ENCODE measurements at regions of chr3 and their contacts with region 1.

Region 1: GRCh38 chr3:57100046-57100695 is 39.7 kb downstream of the SPATA12 start:
- DNase-seq: peak; percentile 68
- H3K4me3 ChIP-seq: no peak overlapping the region
- H3K27ac ChIP-seq: no peak overlapping the region
- H3K4me1 ChIP-seq: no peaks in the 10 kb centered on the region
- H3K27me3 ChIP-seq: no peaks in the 10 kb centered on the region
- CTCF ChIP-seq: peak; percentile 68

Region 2: DNA sequence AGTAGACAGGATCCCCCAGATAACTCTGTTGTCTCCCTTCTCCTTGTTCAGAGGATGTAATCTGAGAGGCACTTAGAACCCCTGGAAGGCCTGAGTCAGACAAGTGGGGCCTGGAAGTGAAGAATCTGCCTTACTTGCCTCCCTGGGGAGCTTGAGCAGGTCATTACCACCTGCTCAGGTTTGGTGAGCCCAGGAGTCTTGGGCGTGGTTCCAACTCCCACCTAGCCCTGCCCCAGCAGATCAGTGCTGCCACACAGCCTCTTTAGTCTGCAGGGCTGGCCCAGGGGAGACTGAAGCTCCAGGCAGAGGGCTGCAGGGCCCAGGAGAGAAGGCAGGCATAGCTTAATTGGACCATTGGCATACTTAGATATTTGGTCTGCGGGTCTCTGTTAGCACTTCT is 861.9 kb before region 1 on chr3:
- CTCF ChIA-PET with region 1: no interaction called
- POLR2A ChIA-PET with region 1: no interaction called
- intact Hi-C with region 1: no loop called
- DNase-seq: no peak
- H3K4me3 ChIP-seq: no peak overlapping the region
- H3K27ac ChIP-seq: no peak overlapping the region
- H3K4me1 ChIP-seq: no peaks in the 10 kb centered on the region
- H3K27me3 ChIP-seq: no peaks in the 10 kb centered on the region
- CTCF ChIP-seq: no peak

Region 3: GRCh38 chr3:57434041-57434440 is 333.9 kb after region 1 on chr3:
- CTCF ChIA-PET with region 1: no interaction called
- POLR2A ChIA-PET with region 1: no interaction called
- intact Hi-C with region 1: loop called (anchors 10 kb)
- DNase-seq: peak; percentile 35
- H3K4me3 ChIP-seq: no peak overlapping the region
- H3K27ac ChIP-seq: no peak overlapping the region
- H3K4me1 ChIP-seq: no peaks in the 10 kb centered on the region
- H3K27me3 ChIP-seq: no peaks in the 10 kb centered on the region
- CTCF ChIP-seq: peak; percentile 40